CD4-positive, alpha-beta memory T cell (primary cell): ENCODE measurements at regions of chr16 and their contacts with region 1.

Region 1: DNA sequence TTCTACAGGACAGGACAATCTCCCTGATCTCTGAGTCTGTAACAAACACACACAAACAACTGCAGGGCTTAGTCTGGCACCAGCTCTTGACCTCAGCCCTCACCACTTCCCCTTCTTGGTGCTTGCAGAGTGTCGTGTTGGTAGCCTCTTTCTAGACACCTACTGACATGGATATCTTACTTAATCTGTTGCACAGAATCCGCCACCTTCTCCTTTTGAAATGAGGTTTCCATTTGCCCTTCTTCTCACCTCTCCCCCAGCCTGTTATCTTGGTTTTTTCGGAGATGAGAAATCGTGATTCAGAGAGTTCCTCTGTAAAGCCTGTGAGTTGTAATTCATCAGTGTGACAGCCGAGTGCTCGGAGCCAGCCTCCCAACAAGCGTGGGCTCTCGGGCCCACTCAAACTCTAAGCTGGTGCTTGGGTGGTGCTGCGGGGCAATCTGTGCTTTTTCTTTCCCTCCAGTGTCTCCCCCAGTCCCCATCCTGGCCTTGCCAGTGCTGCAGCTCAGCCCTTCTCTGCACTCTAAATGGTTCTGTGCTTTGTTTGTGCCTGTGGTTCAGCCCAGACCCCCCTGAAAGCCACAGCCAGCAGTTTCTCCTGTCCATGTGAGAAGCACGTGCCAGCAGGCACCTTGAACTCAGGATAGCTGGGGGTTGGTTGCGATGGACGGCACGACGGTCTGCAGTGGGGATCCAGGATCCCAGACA is 28.1 kb downstream of the KIAA0513 start:
- DNase-seq: peak; percentile 81 to 94 (median 85)
- H3K4me3 ChIP-seq: peak overlapping the region; percentile 24 to 59
- H3K4me3 Mint-ChIP-seq: peak overlapping the region; percentile 71 to 92 (median 84)
- H3K27ac ChIP-seq: peak overlapping the region; percentile 57
- H3K27ac Mint-ChIP-seq: peak overlapping the region; percentile 84 to 98 (median 95)
- H3K4me1 ChIP-seq: peaks cover 43% of the 10 kb centered on the region
- H3K4me1 Mint-ChIP-seq: peaks cover 33 to 47% (median 39%) of the 10 kb centered on the region in 4 donors
- H3K27me3 ChIP-seq: no peaks in the 10 kb centered on the region
- H3K27me3 Mint-ChIP-seq: no peaks in the 10 kb centered on the region

Region 2: GRCh38 chr16:85010931-85011845 is 44.5 kb before region 1 on chr16 and contains the start of gene ZDHHC7:
- CTCF ChIA-PET with region 1: interaction called, 9 read pairs
- POLR2A ChIA-PET with region 1: interaction called, 28 read pairs
- intact Hi-C with region 1: loop called (anchors 1 kb)
- DNase-seq: peak; percentile 82 to 86 (median 84)
- H3K4me3 ChIP-seq: peak within 1 kb of the TSS; percentile 96 to 99
- H3K4me3 Mint-ChIP-seq: peak within 1 kb of the TSS; percentile 96 to 98 (median 98)
- H3K27ac ChIP-seq: peak within 1 kb of the TSS; percentile 93
- H3K27ac Mint-ChIP-seq: peak within 1 kb of the TSS; percentile 94 to 99 (median 99)
- H3K4me1 ChIP-seq: peaks cover 26% of the 10 kb centered on the region
- H3K4me1 Mint-ChIP-seq: peaks cover 22 to 51% (median 38%) of the 10 kb centered on the region in 4 donors
- H3K27me3 ChIP-seq: no peaks in the 10 kb centered on the region
- H3K27me3 Mint-ChIP-seq: peaks cover 0 to 2% of the 10 kb centered on the region in 2 donors
- total RNA-seq, gene ZDHHC7: 33.8 to 35.6 TPM